SK-N-SH (cell line): ENCODE measurements at regions of chr12 and their contacts with region 1.

Region 1: DNA sequence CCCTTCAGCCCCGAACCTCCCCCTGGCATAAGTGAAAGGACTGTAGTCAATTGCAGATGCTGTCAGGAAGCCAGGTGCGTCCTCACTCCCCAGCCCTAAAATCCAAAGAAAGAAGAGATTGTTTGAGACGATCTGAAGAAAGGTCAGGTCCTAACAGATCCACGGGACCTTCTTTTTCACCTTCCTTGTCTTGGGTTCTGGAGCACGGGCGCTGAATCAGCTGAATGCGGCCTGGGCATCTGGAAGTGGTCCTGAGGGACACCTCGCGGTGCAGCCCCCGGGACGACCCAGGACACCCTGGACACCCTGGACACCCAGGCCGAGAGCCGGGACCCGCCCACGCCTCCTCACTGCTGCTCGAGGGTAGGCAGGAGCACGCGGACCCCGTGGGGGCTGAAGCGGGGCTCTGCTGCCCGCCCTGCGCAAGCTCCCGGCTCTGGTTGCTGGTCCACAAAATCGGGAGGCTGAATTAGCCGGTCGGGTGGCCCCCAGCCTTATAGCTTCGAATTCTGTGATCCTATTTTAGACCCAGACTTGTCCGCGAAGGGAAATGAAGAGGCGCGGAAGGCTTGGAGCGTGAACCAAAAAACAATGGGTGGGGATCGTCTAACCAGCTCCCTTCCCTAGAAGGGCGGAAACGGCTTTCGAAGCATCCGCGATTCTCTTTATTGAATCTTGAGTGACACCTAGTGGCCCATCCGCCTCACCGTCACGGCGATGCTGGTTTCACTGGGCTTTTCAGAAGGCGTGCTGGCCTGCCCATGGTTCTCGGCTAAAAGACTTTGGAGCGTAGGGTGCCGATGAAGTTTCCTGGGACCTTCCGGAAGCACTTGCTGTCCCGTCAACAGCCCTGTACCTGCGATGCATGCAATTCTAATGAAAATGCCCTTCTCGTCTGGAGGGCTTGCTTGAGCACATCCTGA is 46.4 kb upstream of the PLXNC1 start:
- DNase-seq: peak; percentile 80
- H3K4me3 ChIP-seq: peak overlapping the region; percentile 63
- H3K27ac ChIP-seq: peak overlapping the region in 1 of 2 experiments; percentile 35; a peak in 1 of 4 replicates
- H3K4me1 ChIP-seq: peaks cover 8 to 14% of the 10 kb centered on the region in 2 experiments; a peak in 2 of 4 replicates
- H3K27me3 ChIP-seq: no peaks in the 10 kb centered on the region
- CTCF ChIP-seq: peak; percentile 87
- EP300 ChIP-seq: no peak
- RAD21 ChIP-seq: peak; percentile 88

Region 2: GRCh38 chr12:93403988-93404803 is 697.8 kb before region 1 on chr12:
- CTCF ChIA-PET with region 1: interaction called, 12 read pairs
- POLR2A ChIA-PET with region 1: no interaction called
- DNase-seq: no peak
- H3K4me3 ChIP-seq: no peak overlapping the region
- H3K27ac ChIP-seq: peak overlapping the region; percentile 16 to 23; a peak in 3 of 4 replicates
- H3K4me1 ChIP-seq: peaks cover 0 to 10% of the 10 kb centered on the region in 2 experiments; a peak in 3 of 4 replicates
- H3K27me3 ChIP-seq: no peaks in the 10 kb centered on the region
- CTCF ChIP-seq: no peak
- EP300 ChIP-seq: no peak
- RAD21 ChIP-seq: no peak

Region 3: DNA sequence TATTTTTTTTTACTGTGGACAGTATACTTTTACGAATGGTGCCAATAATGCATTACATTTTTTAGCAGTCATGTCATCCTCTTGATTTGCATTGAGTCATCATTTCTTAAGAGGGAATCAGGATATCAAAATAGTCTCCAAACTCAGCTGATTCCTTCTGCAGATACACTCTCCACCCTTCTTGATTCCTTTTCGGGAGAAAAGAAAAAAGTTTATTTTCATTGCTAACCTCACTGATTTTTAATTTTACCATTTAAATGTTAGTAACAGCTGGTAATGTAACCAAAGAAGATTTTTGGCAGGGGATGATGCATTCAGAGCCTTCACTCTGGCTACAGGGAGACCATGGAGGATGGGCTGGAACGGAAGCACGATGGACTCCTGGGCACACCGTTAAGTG is 587.1 kb before region 1 on chr12:
- CTCF ChIA-PET with region 1: interaction called, 42 read pairs
- POLR2A ChIA-PET with region 1: no interaction called
- DNase-seq: no peak
- H3K4me3 ChIP-seq: 0 out of 4 replicates have a peak overlapping the region, but pooled peaks of 1 of the 2 experiments have one; percentile 35
- H3K27ac ChIP-seq: peak overlapping the region in 1 of 2 experiments; percentile 76; a peak in 2 of 4 replicates
- H3K4me1 ChIP-seq: peaks cover 2 to 7% of the 10 kb centered on the region in 2 experiments; a peak in 3 of 4 replicates
- H3K27me3 ChIP-seq: no peaks in the 10 kb centered on the region
- CTCF ChIP-seq: no peak
- EP300 ChIP-seq: no peak
- RAD21 ChIP-seq: no peak

Region 4: GRCh38 chr12:93569656-93570551 is 532.1 kb before region 1 on chr12:
- CTCF ChIA-PET with region 1: interaction called, 149 read pairs
- POLR2A ChIA-PET with region 1: interaction called, 11 read pairs
- DNase-seq: peak; percentile 90
- H3K4me3 ChIP-seq: peak overlapping the region; percentile 71 to 97
- H3K27ac ChIP-seq: peak overlapping the region; percentile 90 to 92
- H3K4me1 ChIP-seq: peaks cover 0 to 17% of the 10 kb centered on the region in 2 experiments; a peak in 1 of 4 replicates
- H3K27me3 ChIP-seq: no peaks in the 10 kb centered on the region
- CTCF ChIP-seq: peak; percentile 72
- EP300 ChIP-seq: peak in 1 of 2 experiments; percentile 9; a peak in 1 of 4 replicates
- RAD21 ChIP-seq: peak; percentile 83

Region 5: DNA sequence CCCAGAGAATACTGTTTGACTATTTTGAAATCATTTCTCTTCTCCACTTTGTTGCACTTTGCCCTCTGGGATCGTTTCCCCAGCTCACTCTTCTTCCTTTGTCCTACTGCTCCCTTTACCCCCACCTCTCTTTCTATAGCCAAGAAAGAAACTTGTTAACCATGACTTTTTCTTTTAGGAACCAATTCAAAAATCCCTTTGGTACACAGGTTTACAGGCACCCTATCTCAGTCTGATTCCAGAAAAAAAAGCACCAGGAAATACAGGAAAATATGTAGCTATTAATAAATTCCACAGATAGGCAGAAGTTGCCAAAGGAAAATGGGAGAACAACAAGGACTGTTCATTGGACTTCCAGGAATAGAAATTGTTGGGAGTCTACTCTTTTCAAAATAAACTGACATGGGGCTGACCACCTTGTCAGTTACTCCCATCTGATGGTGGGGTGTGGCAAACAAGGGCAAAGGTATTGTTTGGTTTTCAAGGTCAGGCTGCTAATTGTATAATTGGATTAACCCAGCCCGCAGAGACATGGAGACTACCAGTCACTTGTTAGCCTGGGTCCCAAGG is 342.4 kb before region 1 on chr12:
- CTCF ChIA-PET with region 1: interaction called, 128 read pairs
- POLR2A ChIA-PET with region 1: no interaction called
- DNase-seq: no peak
- H3K4me3 ChIP-seq: no peak overlapping the region
- H3K27ac ChIP-seq: no peak overlapping the region
- H3K4me1 ChIP-seq: peaks cover 0 to 5% of the 10 kb centered on the region in 2 experiments; a peak in 2 of 4 replicates
- H3K27me3 ChIP-seq: no peaks in the 10 kb centered on the region
- CTCF ChIP-seq: no peak
- EP300 ChIP-seq: no peak
- RAD21 ChIP-seq: no peak

Region 6: DNA sequence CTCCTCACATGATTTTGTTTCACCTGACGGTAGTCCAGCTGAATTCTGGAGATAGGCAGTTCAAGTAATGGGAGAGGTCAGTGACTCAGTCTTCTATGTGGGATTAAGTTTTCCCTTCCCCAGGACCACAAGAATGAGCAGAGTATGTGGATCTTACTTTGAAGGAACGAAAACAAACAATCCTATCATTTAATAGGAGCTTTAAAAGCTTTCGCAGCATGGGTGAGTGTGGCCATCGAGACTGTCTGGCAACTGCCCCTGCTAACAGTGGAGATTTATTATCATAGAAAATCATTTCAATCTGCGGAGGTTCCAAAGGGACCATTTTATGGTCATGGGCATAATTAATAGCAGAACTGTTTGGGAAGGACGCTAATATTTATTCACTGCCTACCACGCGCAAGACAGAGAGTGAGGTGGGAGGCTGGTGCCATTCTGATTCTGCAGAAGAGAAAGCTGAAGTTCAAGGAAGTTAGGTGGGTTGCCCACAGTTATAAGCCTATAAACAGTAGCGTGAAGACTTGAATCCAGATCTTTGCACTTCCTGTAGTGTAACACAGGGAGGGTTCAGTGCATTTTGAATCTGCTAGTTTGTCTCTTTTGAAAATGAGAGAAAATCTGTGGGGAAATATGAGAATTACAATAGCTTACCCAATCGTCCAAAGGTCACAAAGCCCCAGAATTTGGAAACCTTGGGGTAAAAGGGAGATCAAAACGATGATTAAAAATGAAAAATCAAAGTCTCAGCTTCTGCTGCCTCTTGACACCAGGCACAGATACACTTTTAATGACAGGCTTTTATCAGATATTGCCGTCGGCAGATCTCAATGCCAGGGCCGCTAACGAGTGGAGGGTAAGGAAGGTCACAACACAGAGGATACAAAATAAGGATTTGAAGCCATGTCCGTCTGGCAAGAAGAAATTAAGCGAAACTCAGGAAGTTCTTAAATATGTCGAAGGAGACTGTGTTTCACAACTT is 215.2 kb before region 1 on chr12:
- CTCF ChIA-PET with region 1: interaction called, 25 read pairs
- POLR2A ChIA-PET with region 1: interaction called, 4 read pairs
- DNase-seq: peak; percentile 64
- H3K4me3 ChIP-seq: no peak overlapping the region; a peak in 1 of 4 replicates
- H3K27ac ChIP-seq: peak overlapping the region; percentile 59 to 86; a peak in 3 of 4 replicates
- H3K4me1 ChIP-seq: peaks cover 24 to 35% of the 10 kb centered on the region in 2 experiments; a peak in 3 of 4 replicates
- H3K27me3 ChIP-seq: no peaks in the 10 kb centered on the region
- CTCF ChIP-seq: no peak
- EP300 ChIP-seq: peak; percentile 52 to 88; a peak in 3 of 4 replicates
- RAD21 ChIP-seq: peak; percentile 37; the same call in 1 of the 2 replicates

Region 7: GRCh38 chr12:94112132-94112531 is 10.1 kb after region 1 on chr12:
- CTCF ChIA-PET with region 1: interaction called, 51 read pairs
- POLR2A ChIA-PET with region 1: no interaction called
- DNase-seq: no peak
- H3K4me3 ChIP-seq: no peak overlapping the region
- H3K27ac ChIP-seq: no peak overlapping the region
- H3K4me1 ChIP-seq: peaks cover 3 to 8% of the 10 kb centered on the region in 2 experiments
- H3K27me3 ChIP-seq: no peaks in the 10 kb centered on the region
- CTCF ChIP-seq: no peak
- EP300 ChIP-seq: no peak
- RAD21 ChIP-seq: no peak

Region 8: DNA sequence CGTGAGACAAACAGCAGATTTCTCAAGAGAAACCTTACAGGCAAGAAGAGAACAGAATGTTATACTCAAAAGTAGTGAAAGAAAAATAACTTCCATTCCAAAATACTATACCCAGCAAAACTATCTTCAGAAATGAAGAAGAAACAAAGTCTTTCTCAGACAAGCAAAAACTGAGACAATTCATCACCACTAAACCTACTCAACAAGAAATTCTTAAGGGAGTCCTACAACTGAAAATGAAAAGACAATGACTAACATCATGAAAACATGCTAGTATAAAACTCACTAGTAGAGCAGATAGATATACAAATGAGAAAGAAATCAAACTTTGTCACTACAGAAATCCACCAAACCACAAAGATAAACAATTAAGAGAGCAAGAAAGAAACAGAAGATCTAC is 251.1 kb after region 1 on chr12:
- CTCF ChIA-PET with region 1: no interaction called
- POLR2A ChIA-PET with region 1: no interaction called
- DNase-seq: no peak
- H3K4me3 ChIP-seq: no peak overlapping the region
- H3K27ac ChIP-seq: no peak overlapping the region
- H3K4me1 ChIP-seq: peaks cover 0 to 3% of the 10 kb centered on the region in 2 experiments; a peak in 1 of 4 replicates
- H3K27me3 ChIP-seq: no peaks in the 10 kb centered on the region
- CTCF ChIP-seq: no peak
- EP300 ChIP-seq: no peak
- RAD21 ChIP-seq: no peak

Region 9: DNA sequence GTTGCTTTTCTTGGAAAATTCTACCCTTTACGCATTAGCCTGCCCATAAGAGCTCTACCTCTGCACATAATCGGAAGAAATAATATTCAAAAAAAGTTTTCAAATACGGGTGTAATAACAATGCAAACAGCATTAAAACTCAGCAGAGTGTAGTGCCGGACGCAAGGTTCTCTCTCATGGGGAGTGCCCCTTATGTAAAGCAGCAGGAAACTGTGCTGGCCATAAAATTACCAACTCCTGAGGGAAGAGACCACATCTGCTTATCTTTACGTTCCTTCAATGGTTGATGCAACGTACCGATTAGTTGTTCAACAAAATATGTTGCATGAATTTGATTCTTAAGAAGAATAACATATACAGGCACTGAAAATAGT is 667.0 kb after region 1 on chr12:
- CTCF ChIA-PET with region 1: no interaction called
- POLR2A ChIA-PET with region 1: no interaction called
- DNase-seq: no peak
- H3K4me3 ChIP-seq: no peak overlapping the region
- H3K27ac ChIP-seq: no peak overlapping the region; a peak in 1 of 4 replicates
- H3K4me1 ChIP-seq: peaks cover 0 to 6% of the 10 kb centered on the region in 2 experiments; a peak in 3 of 4 replicates
- H3K27me3 ChIP-seq: no peaks in the 10 kb centered on the region; the same call in 1 of the 2 replicates
- CTCF ChIP-seq: no peak
- EP300 ChIP-seq: no peak
- RAD21 ChIP-seq: no peak

Region 10: GRCh38 chr12:94813314-94813713 is 711.3 kb after region 1 on chr12:
- CTCF ChIA-PET with region 1: no interaction called
- POLR2A ChIA-PET with region 1: no interaction called
- DNase-seq: no peak
- H3K4me3 ChIP-seq: no peak overlapping the region
- H3K27ac ChIP-seq: no peak overlapping the region
- H3K4me1 ChIP-seq: no peaks in the 10 kb centered on the region
- H3K27me3 ChIP-seq: no peaks in the 10 kb centered on the region
- CTCF ChIP-seq: no peak
- EP300 ChIP-seq: no peak
- RAD21 ChIP-seq: no peak